ENCODE measurements at regions of chrX and their contacts with region 1.

Region 1: GRCh38 chrX:128754130-128754529 is 701.9 kb upstream of the ACTRT1 start:
- DNase-seq: no peak
- H3K4me3 ChIP-seq: no peak overlapping the region
- H3K27ac ChIP-seq: no peak overlapping the region
- H3K4me1 ChIP-seq: no peaks in the 10 kb centered on the region
- H3K27me3 ChIP-seq: no peaks in the 10 kb centered on the region
- CTCF ChIP-seq: no peak

Region 2: DNA sequence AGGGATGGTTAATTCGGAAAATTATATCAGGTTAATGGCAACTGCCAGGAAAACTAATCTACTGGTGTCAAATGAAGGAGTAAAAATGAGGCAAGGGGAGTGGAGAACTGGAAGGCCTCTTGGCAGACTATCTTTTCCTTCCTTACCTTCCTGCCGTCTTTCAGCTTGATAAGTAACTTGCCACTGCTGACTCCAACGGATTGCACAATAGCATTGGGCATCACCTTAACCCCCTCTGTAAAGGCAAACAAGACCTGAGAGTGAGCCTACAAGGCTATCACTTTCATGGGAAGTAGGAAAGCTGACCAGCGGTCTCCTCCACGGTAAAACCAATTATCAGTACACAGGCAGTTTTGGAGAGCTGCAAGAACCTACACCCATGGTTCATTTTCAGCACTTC is 1382.4 kb after region 1 on chrX:
- CTCF ChIA-PET with region 1: no interaction called
- POLR2A ChIA-PET with region 1: interaction called, 12 read pairs
- intact Hi-C with region 1: no loop called
- DNase-seq: no peak
- H3K4me3 ChIP-seq: no peak overlapping the region
- H3K27ac ChIP-seq: no peak overlapping the region
- H3K4me1 ChIP-seq: no peaks in the 10 kb centered on the region
- H3K27me3 ChIP-seq: no peaks in the 10 kb centered on the region
- CTCF ChIP-seq: no peak